ENCODE measurements at regions of chr3 and their contacts with region 1.

Region 1: DNA sequence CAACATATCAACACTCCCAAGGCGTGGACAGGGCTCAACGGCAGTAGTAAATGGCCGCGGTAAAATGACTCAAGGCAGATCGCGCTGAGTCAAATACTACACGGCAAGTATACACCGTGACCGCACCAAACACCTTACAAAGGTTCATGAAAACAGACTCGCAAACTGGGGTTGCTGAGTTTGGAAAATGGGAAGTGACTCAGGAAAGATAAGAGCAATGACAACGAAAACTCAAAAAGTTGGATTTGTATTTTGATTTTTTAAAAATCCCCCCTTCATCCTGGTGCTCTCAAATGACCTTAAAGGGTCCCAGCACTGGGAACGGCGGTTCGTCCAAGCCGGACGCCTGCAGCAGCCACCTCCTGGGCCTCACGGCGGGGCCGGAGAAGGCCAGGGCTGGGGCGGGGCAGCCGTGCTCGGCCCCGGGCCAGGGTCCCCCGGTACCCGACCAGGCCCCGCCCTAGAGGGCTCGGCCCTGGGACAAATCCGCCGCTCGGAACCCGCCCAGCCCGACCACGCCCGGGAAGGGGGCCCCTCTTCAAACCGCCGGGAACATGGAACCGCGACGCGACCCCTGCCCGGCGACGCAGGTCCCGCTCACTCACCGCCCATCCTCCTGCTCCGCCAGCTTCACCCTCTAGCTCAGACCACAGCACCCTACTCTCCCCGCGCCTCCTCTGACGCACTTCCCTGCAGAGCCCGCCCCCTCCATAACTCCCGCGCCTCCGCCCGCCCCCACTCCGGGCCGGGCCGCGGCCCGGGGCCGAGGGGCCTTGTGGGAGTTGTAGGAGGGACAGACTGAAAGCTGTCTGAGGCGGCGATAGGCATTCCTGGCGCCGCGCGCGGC is at the start of gene CLDND1:
- DNase-seq: peak; percentile 98
- H3K4me3 ChIP-seq: peak within 1 kb of the TSS; percentile 56 to 93 (median 89)
- H3K27ac ChIP-seq: peak within 1 kb of the TSS; percentile 93 to 98 (median 96)
- H3K4me1 ChIP-seq: peaks cover 9 to 15% (median 12%) of the 10 kb centered on the region in 4 donors
- H3K27me3 ChIP-seq: no peaks in the 10 kb centered on the region
- CTCF ChIP-seq: no peak
- EP300 ChIP-seq: no peak
- POLR2A ChIP-seq: peak; percentile 94
- total RNA-seq, gene CLDND1: 105 to 202 (median 162) TPM

Region 2: GRCh38 chr3:98901392-98902350 is 379.2 kb after region 1 on chr3 and contains the start of gene DCBLD2:
- in situ Hi-C with region 1: no loop called
- intact Hi-C with region 1: loop called (anchors 5 kb)
- DNase-seq: peak; percentile 97
- H3K4me3 ChIP-seq: peak within 1 kb of the TSS; percentile 87 to 96 (median 93)
- H3K27ac ChIP-seq: peak within 1 kb of the TSS; percentile 90 to 96 (median 94)
- H3K4me1 ChIP-seq: peaks cover 0 to 21% (median 4%) of the 10 kb centered on the region in 4 donors
- H3K27me3 ChIP-seq: no peaks in the 10 kb centered on the region
- CTCF ChIP-seq: no peak
- EP300 ChIP-seq: no peak
- POLR2A ChIP-seq: peak; percentile 73
- total RNA-seq, gene DCBLD2: 14.3 to 20.6 (median 18.4) TPM

Measured in transverse colon (tissue), 4 donors.